Activated CD4-positive, alpha-beta T cell treated with anti-CD3 and anti-CD28 coated beads for 36 hours (primary cell): ENCODE measurements at regions of chr7 and their contacts with region 1.

Region 1: DNA sequence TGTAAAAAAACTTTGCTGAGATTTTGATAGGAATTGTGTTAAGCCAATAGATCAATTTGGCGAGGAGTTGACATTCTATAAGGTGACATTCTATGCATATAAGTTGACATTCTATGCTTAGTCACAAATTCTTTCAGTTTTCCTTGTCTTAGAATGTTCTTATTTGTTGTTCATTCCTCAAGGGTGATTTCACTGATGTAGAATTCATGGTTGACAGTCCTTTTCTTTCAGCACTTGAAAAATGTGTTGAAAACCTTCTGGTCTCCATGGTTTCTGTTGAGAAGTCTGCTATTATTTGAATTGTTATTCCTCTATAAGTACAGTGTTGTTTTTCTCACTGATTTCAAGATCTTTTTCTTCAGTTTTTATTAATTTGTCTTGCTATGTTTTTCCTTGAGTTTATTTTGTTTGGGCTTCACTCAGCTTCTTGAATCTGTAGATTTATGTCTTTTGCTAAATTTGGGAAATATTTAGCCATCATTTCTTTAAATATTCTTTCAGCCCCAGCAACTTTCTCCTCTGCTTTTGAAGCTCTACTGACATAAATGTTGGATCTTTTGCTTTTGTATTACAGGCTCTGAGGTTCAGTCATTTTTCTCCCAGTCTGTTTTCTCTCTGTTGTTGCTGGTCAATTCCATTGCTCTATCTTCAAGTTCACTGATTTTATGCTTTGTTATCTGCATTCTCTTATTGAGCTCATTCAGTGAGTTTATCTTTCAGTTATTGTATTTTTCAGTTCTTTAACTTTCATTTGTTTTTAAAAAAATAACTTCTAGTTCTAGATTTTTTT is 154.9 kb downstream of the SDK1 start:
- DNase-seq: no peak
- ATAC-seq: no peak
- H3K4me3 Mint-ChIP-seq: no peak overlapping the region
- H3K27ac Mint-ChIP-seq: no peak overlapping the region
- H3K4me1 Mint-ChIP-seq: peaks cover 24% of the 10 kb centered on the region
- H3K27me3 Mint-ChIP-seq: no peaks in the 10 kb centered on the region

Region 2: GRCh38 chr7:2621948-2622640 is 833.9 kb before region 1 on chr7:
- CTCF ChIA-PET with region 1: no interaction called
- POLR2A ChIA-PET with region 1: no interaction called
- intact Hi-C with region 1: no loop called
- DNase-seq: no peak
- ATAC-seq: no peak
- H3K4me3 Mint-ChIP-seq: no peak overlapping the region
- H3K27ac Mint-ChIP-seq: no peak overlapping the region
- H3K4me1 Mint-ChIP-seq: no peaks in the 10 kb centered on the region
- H3K27me3 Mint-ChIP-seq: peaks cover 5% of the 10 kb centered on the region

Region 3: GRCh38 chr7:3408814-3409595 is 47.0 kb before region 1 on chr7:
- CTCF ChIA-PET with region 1: no interaction called
- POLR2A ChIA-PET with region 1: no interaction called
- intact Hi-C with region 1: loop called in 1 of 2 experiments (anchors 5 kb)
- DNase-seq: no peak
- ATAC-seq: peak; percentile 95
- H3K4me3 Mint-ChIP-seq: no peak overlapping the region
- H3K27ac Mint-ChIP-seq: no peak overlapping the region
- H3K4me1 Mint-ChIP-seq: peaks cover 14% of the 10 kb centered on the region
- H3K27me3 Mint-ChIP-seq: peaks cover 13% of the 10 kb centered on the region